ENCODE measurements at regions of chr2 and their contacts with region 1.

Region 1: GRCh38 chr2:133886735-133887660 is 318.7 kb upstream of the NCKAP5 start:
- DNase-seq: peak; percentile 57 to 70 (median 68)
- ATAC-seq: peak; percentile 94
- H3K4me3 ChIP-seq: no peak overlapping the region
- H3K27ac ChIP-seq: no peak overlapping the region
- H3K4me1 ChIP-seq: no peaks in the 10 kb centered on the region
- H3K27me3 ChIP-seq: peaks cover 3 to 6% of the 10 kb centered on the region in 2 experiments; a peak in 3 of 5 replicates
- CTCF ChIP-seq: peak; percentile 60 to 72 (median 69)
- EP300 ChIP-seq: no peak
- POLR2A ChIP-seq: no peak
- RAD21 ChIP-seq: peak; percentile 60 to 69

Region 2: DNA sequence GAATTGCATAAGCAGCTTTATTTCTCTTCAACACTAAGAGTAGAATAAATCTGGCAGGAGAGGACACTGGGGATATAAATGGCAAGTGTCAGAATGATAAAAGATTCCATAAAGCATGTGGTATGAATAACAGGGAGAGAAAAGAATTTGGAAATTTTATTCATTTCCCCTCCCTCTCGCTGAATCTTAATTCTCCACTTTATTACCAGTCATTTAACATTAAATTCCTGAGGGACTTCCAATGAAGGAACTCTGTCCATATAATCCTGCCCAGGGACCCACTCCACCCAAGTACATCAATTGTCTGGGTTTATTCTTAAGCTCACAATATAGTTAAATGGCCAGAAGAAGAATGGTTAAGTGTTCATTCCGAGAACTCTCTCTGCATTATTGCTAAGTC is 169.2 kb after region 1 on chr2:
- CTCF ChIA-PET with region 1: no interaction called
- POLR2A ChIA-PET with region 1: no interaction called
- in situ Hi-C with region 1: no loop called
- intact Hi-C with region 1: no loop called
- DNase-seq: no peak
- ATAC-seq: no peak
- H3K4me3 ChIP-seq: no peak overlapping the region
- H3K27ac ChIP-seq: no peak overlapping the region
- H3K4me1 ChIP-seq: no peaks in the 10 kb centered on the region
- H3K27me3 ChIP-seq: no peaks in the 10 kb centered on the region
- CTCF ChIP-seq: no peak
- EP300 ChIP-seq: no peak
- POLR2A ChIP-seq: no peak
- RAD21 ChIP-seq: no peak

Region 3: GRCh38 chr2:134079373-134079772 is 192.4 kb after region 1 on chr2:
- CTCF ChIA-PET with region 1: no interaction called
- POLR2A ChIA-PET with region 1: no interaction called
- in situ Hi-C with region 1: no loop called
- intact Hi-C with region 1: loop called (anchors 10 kb)
- DNase-seq: no peak
- ATAC-seq: no peak
- H3K4me3 ChIP-seq: no peak overlapping the region
- H3K27ac ChIP-seq: no peak overlapping the region
- H3K4me1 ChIP-seq: no peaks in the 10 kb centered on the region
- H3K27me3 ChIP-seq: peaks cover 10 to 40% of the 10 kb centered on the region in 2 experiments; a peak in 4 of 5 replicates
- CTCF ChIP-seq: no peak
- EP300 ChIP-seq: no peak
- POLR2A ChIP-seq: no peak
- RAD21 ChIP-seq: no peak

Region 4: GRCh38 chr2:134109725-134110124 is 222.7 kb after region 1 on chr2:
- CTCF ChIA-PET with region 1: no interaction called
- POLR2A ChIA-PET with region 1: no interaction called
- in situ Hi-C with region 1: no loop called
- intact Hi-C with region 1: no loop called
- DNase-seq: no peak
- ATAC-seq: no peak
- H3K4me3 ChIP-seq: no peak overlapping the region
- H3K27ac ChIP-seq: no peak overlapping the region
- H3K4me1 ChIP-seq: peaks cover 0 to 4% of the 10 kb centered on the region in 2 experiments; a peak in 2 of 5 replicates
- H3K27me3 ChIP-seq: peaks cover 0 to 5% of the 10 kb centered on the region in 2 experiments; a peak in 4 of 5 replicates
- CTCF ChIP-seq: no peak
- EP300 ChIP-seq: no peak
- POLR2A ChIP-seq: no peak
- RAD21 ChIP-seq: no peak

Region 5: GRCh38 chr2:134245340-134245984 is 358.5 kb after region 1 on chr2:
- CTCF ChIA-PET with region 1: interaction called, 3 read pairs
- POLR2A ChIA-PET with region 1: no interaction called
- in situ Hi-C with region 1: no loop called
- intact Hi-C with region 1: loop called (anchors 1 kb)
- DNase-seq: peak; percentile 35 to 78 (median 39)
- ATAC-seq: peak; percentile 89
- H3K4me3 ChIP-seq: no peak overlapping the region
- H3K27ac ChIP-seq: no peak overlapping the region
- H3K4me1 ChIP-seq: peaks cover 4 to 8% of the 10 kb centered on the region in 2 experiments; a peak in 2 of 5 replicates
- H3K27me3 ChIP-seq: no peaks in the 10 kb centered on the region
- CTCF ChIP-seq: peak; percentile 66 to 81 (median 77)
- EP300 ChIP-seq: no peak
- POLR2A ChIP-seq: no peak
- RAD21 ChIP-seq: peak; percentile 75 to 77

Region 6: DNA sequence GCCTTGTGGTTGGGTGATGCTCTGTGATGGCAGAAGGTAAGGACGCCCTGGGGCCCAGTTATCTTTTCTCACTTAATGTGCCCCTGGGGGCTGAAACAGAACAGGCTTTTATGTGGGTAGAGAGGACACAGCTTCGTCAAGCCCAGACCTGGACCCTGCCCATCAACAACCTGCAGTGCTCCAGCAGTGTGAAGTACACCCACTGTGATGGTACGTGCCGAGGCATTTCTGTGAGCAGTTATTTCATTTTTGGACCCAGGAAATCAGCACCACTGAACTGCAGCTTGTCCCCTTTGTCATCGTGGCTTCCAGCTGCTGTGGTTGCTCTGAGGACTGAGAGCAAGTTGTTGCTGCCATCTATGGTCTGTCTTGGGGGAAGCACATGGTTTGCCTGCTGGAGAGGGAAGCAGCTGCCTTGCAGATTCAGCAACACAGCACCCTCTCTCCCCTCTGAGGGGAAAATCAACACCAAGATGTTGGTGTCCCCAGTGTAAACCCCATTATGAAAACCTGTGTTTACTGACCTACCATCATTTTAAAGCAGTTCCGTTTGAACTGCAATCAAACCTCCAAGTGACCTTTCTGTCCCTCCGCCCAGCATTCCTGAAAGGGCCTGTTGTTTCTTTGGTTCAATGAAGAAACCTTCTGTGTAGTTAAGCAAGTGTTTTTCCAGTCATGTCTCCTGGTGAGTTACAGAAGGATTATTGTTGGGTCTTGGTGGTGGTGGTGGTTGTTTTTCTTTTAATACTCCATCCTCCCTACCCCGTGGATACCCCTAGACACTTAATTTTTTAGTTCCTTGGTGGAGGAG is 525.0 kb after region 1 on chr2:
- CTCF ChIA-PET with region 1: interaction called, 7 read pairs
- POLR2A ChIA-PET with region 1: no interaction called
- in situ Hi-C with region 1: loop called (anchors 25 kb)
- intact Hi-C with region 1: loop called (anchors 2 kb)
- DNase-seq: peak; percentile 15 to 66 (median 29)
- ATAC-seq: peak; percentile 95
- H3K4me3 ChIP-seq: no peak overlapping the region
- H3K27ac ChIP-seq: no peak overlapping the region
- H3K4me1 ChIP-seq: no peaks in the 10 kb centered on the region; a peak in 1 of 5 replicates
- H3K27me3 ChIP-seq: no peaks in the 10 kb centered on the region
- CTCF ChIP-seq: peak; percentile 64 to 72 (median 70)
- EP300 ChIP-seq: no peak
- POLR2A ChIP-seq: no peak
- RAD21 ChIP-seq: peak; percentile 60 to 74

Region 7: GRCh38 chr2:134452042-134452733 is 565.2 kb after region 1 on chr2:
- CTCF ChIA-PET with region 1: interaction called, 11 read pairs
- POLR2A ChIA-PET with region 1: no interaction called
- in situ Hi-C with region 1: no loop called
- intact Hi-C with region 1: loop called (anchors 2 kb)
- DNase-seq: no peak
- ATAC-seq: no peak
- H3K4me3 ChIP-seq: no peak overlapping the region
- H3K27ac ChIP-seq: no peak overlapping the region
- H3K4me1 ChIP-seq: no peaks in the 10 kb centered on the region
- H3K27me3 ChIP-seq: peaks cover 0 to 25% of the 10 kb centered on the region in 2 experiments; a peak in 3 of 5 replicates
- CTCF ChIP-seq: no peak
- EP300 ChIP-seq: no peak
- POLR2A ChIP-seq: no peak
- RAD21 ChIP-seq: no peak